PC-3 (cell line): ENCODE measurements at regions of chr5 and their contacts with region 1.

Region 1: DNA sequence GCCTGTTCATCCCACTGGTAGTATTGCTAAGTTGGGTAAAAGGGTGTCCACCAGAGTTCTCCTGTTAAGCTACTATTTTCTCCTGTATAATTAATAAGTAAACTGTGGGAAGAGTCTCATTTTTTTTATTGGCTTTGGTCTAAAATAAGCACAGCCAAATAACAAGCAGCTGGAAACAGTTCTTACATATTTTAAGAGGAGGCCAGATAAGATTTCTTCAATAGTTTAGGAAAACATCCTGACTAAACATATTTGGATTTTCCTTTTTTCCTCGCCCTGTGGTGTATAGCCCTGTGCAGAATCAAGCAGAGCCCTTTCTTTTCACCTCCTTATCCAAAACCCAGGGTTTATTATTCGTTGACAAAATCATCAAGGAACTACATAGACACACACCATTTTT is 122.2 kb upstream of the ZNF608 start:
- DNase-seq: no peak
- ATAC-seq: no peak
- H3K4me3 ChIP-seq: no peak overlapping the region
- H3K27ac ChIP-seq: no peak overlapping the region
- H3K4me1 ChIP-seq: no peaks in the 10 kb centered on the region
- H3K27me3 ChIP-seq: no peaks in the 10 kb centered on the region
- CTCF ChIP-seq: no peak

Region 2: GRCh38 chr5:124841829-124842712 is 26.6 kb before region 1 on chr5:
- CTCF ChIA-PET with region 1: no interaction called
- POLR2A ChIA-PET with region 1: no interaction called
- intact Hi-C with region 1: no loop called
- DNase-seq: no peak
- ATAC-seq: no peak
- H3K4me3 ChIP-seq: no peak overlapping the region
- H3K27ac ChIP-seq: no peak overlapping the region
- H3K4me1 ChIP-seq: no peaks in the 10 kb centered on the region
- H3K27me3 ChIP-seq: no peaks in the 10 kb centered on the region
- CTCF ChIP-seq: no peak

Region 3: DNA sequence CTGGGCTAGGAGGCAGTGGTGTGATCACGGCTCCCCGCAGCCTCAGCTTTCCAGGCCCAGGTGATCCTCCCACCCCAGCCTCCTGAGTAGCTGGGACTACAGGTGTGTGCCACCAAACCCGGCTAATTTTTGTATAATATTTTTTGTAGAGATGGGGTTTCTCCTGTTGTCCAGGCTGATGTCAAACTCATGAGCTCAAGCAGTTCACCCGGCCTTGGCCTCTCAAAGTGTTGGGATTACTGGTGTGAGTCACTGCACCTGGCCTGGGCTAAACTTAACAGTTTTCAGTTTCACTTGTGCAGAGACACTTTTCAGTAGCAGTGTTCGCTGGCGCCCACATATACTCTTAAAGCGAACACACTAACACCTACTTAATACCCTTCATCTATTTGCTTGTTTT is 83.4 kb after region 1 on chr5:
- CTCF ChIA-PET with region 1: no interaction called
- POLR2A ChIA-PET with region 1: no interaction called
- intact Hi-C with region 1: no loop called
- DNase-seq: no peak
- ATAC-seq: no peak
- H3K4me3 ChIP-seq: no peak overlapping the region
- H3K27ac ChIP-seq: no peak overlapping the region
- H3K4me1 ChIP-seq: peaks cover 30% of the 10 kb centered on the region
- H3K27me3 ChIP-seq: no peaks in the 10 kb centered on the region
- CTCF ChIP-seq: no peak

Region 4: DNA sequence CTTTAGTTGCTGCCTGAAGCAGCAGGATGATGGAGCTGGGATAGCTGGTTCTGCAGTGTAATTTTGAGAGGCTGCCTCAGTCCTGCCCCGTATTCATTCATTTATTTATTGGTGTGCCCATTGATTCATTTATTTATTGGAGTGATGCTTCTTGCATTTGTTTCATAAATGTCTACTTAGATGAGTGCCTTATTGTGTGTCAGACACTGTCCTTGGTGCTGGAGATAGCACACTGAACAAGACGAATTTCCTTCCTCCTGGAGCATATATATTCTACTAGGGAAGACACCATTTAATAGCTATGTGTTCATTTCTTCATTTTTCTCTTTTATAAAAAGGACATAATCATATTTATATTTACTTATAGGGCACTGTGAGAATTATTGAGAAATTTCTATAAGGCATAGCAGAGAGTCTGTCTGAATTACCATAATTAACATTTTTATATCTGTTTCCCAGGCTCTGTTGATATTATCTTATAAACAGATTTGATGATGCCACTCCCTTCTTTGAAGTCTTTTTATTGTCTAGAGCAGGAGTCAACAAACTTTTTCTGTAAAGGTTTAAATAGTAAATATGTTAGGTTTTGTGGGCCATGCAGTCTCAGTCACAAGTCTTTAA is 311.6 kb after region 1 on chr5:
- CTCF ChIA-PET with region 1: no interaction called
- POLR2A ChIA-PET with region 1: no interaction called
- intact Hi-C with region 1: no loop called
- DNase-seq: peak; percentile 11
- ATAC-seq: no peak
- H3K4me3 ChIP-seq: no peak overlapping the region
- H3K27ac ChIP-seq: no peak overlapping the region
- H3K4me1 ChIP-seq: peaks cover 30% of the 10 kb centered on the region
- H3K27me3 ChIP-seq: no peaks in the 10 kb centered on the region
- CTCF ChIP-seq: no peak

Region 5: GRCh38 chr5:125835293-125836172 is 966.9 kb after region 1 on chr5:
- CTCF ChIA-PET with region 1: interaction called, 10 read pairs
- POLR2A ChIA-PET with region 1: no interaction called
- intact Hi-C with region 1: no loop called
- DNase-seq: peak; percentile 21
- ATAC-seq: no peak; the same call in 1 of the 2 replicates
- H3K4me3 ChIP-seq: no peak overlapping the region
- H3K27ac ChIP-seq: no peak overlapping the region
- H3K4me1 ChIP-seq: no peaks in the 10 kb centered on the region
- H3K27me3 ChIP-seq: no peaks in the 10 kb centered on the region
- CTCF ChIP-seq: peak; percentile 44